ENCODE measurements at regions of chr7 and their contacts with region 1.

Region 1: DNA sequence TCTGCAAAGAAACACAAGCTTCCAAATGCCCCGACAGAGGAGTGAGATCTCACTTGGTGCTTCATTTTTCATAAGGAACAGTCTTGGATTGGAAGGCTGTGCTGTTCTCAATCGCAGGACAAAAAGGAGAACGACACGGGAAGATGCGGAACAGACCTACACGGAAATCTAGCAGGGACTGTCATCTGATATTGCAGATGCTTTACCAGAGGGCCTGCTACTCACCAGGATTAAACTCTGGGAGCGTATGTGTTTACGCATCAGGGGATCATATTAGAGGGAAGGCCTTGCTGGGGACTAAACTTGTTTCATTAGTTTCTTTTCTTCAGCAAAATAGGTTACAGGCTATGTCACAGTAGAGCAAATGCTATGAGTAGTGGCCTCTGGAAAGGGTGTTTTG is 82.8 kb upstream of the EEPD1 start:
- DNase-seq: no peak
- ATAC-seq: no peak
- H3K4me3 Mint-ChIP-seq: no peak overlapping the region
- H3K27ac Mint-ChIP-seq: no peak overlapping the region
- H3K4me1 Mint-ChIP-seq: no peaks in the 10 kb centered on the region
- H3K27me3 Mint-ChIP-seq: peaks cover 2% of the 10 kb centered on the region

Region 2: GRCh38 chr7:36039243-36039642 is 31.0 kb before region 1 on chr7:
- CTCF ChIA-PET with region 1: no interaction called
- POLR2A ChIA-PET with region 1: no interaction called
- intact Hi-C with region 1: loop called in 1 of 2 experiments (anchors 1 kb)
- DNase-seq: no peak
- ATAC-seq: no peak
- H3K4me3 Mint-ChIP-seq: no peak overlapping the region
- H3K27ac Mint-ChIP-seq: no peak overlapping the region
- H3K4me1 Mint-ChIP-seq: no peaks in the 10 kb centered on the region
- H3K27me3 Mint-ChIP-seq: peaks cover 2% of the 10 kb centered on the region